Sigmoid colon (tissue), 7 donors: ENCODE measurements at regions of chr13 and their contacts with region 1.

Region 1: GRCh38 chr13:21458813-21459701 is at the start of gene ZDHHC20:
- DNase-seq: peak; percentile 95
- H3K4me3 ChIP-seq: peak within 1 kb of the TSS; percentile 87 to 95 (median 92)
- H3K27ac ChIP-seq: peak within 1 kb of the TSS; percentile 92 to 93 (median 92)
- H3K4me1 ChIP-seq: peaks cover 0 to 17% (median 14%) of the 10 kb centered on the region in 4 donors
- H3K27me3 ChIP-seq: no peaks in the 10 kb centered on the region
- CTCF ChIP-seq: no peak
- EP300 ChIP-seq: no peak
- POLR2A ChIP-seq: peak; percentile 38 to 54
- total RNA-seq, gene ZDHHC20: 49.9 to 56.7 (median 55.3) TPM

Region 2: GRCh38 chr13:21297914-21298831 is 160.9 kb before region 1 on chr13:
- intact Hi-C with region 1: loop called (anchors 2 kb)
- DNase-seq: peak; percentile 90
- H3K4me3 ChIP-seq: peak overlapping the region; percentile 73 to 99 (median 90)
- H3K27ac ChIP-seq: peak overlapping the region; percentile 72 to 81 (median 80)
- H3K4me1 ChIP-seq: peaks cover 0 to 25% (median 15%) of the 10 kb centered on the region in 4 donors
- H3K27me3 ChIP-seq: no peaks in the 10 kb centered on the region
- CTCF ChIP-seq: peak; percentile 77 to 85 (median 82)
- EP300 ChIP-seq: no peak
- POLR2A ChIP-seq: peak in 1 of 2 donors; percentile 26

Region 3: GRCh38 chr13:21638319-21639282 is 179.5 kb after region 1 on chr13:
- intact Hi-C with region 1: no loop called
- DNase-seq: no peak
- H3K4me3 ChIP-seq: no peak overlapping the region
- H3K27ac ChIP-seq: no peak overlapping the region
- H3K4me1 ChIP-seq: no peaks in the 10 kb centered on the region
- H3K27me3 ChIP-seq: peaks cover 0 to 8% (median 0%) of the 10 kb centered on the region in 3 donors
- CTCF ChIP-seq: peak in 3 of 4 experiments; percentile 38 to 77 (median 73)
- EP300 ChIP-seq: no peak
- POLR2A ChIP-seq: no peak